PC-9 (cell line): ENCODE measurements at regions of chr2 and their contacts with region 1.

Region 1: GRCh38 chr2:219498280-219499057 is at the start of gene GMPPA:
- DNase-seq: peak; percentile 97
- H3K4me3 ChIP-seq: peak within 1 kb of the TSS; percentile 74
- H3K27ac ChIP-seq: peak within 1 kb of the TSS; percentile 81
- H3K4me1 ChIP-seq: peaks cover 19% of the 10 kb centered on the region
- H3K27me3 ChIP-seq: peaks cover 7% of the 10 kb centered on the region; the same call in 1 of the 2 replicates
- CTCF ChIP-seq: no peak
- total RNA-seq, gene GMPPA: 44.7 and 57.2 TPM in 2 replicates

Region 2: DNA sequence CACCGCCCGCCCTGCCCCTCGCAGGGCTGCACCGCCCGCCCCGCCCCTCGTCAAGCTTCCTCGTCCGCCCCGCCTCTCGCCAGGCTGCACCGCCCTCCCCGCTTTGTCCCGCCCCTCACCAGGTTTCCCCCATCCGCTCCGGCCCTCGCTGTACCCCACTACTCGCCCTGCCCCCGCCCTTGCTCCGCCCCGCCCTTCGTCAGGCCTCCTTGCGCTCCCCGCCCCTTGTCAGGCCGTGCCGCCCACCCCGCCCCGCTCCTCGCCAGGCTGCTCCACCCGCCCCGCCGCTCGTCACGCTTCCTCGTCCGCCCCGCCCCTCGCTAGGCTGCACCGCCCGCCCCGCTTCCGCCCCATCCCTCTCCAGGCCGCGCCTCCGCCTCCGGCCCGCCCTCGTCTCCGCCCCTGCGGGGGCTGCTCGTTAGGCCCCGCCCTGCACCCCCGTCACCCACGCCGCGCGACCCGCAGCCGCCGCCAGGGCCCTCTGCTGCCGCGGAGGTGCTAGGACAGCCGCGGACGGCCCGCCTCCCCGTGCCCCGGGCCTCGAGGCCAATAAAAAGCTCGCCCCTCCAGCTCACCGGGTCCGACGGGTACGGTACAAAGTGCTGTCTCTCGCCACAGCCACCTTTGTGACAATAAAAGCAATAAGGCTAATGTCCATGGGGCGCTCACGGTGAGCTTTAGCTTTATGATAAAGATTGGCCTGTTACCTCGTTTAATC is 110.2 kb before region 1 on chr2:
- CTCF ChIA-PET with region 1: interaction called, 14 read pairs
- POLR2A ChIA-PET with region 1: interaction called, 10 read pairs
- intact Hi-C with region 1: no loop called
- DNase-seq: peak; percentile 71 to 98
- H3K4me3 ChIP-seq: peak overlapping the region; percentile 53
- H3K27ac ChIP-seq: peak overlapping the region; percentile 30
- H3K4me1 ChIP-seq: peaks cover 6% of the 10 kb centered on the region; the same call in 1 of the 2 replicates
- H3K27me3 ChIP-seq: no peaks in the 10 kb centered on the region
- CTCF ChIP-seq: peak; percentile 60

Region 3: GRCh38 chr2:219441451-219442255 is 56.8 kb before region 1 on chr2:
- CTCF ChIA-PET with region 1: interaction called, 16 read pairs
- POLR2A ChIA-PET with region 1: interaction called, 8 read pairs
- intact Hi-C with region 1: no loop called
- DNase-seq: peak in 1 of 2 experiments; percentile 64
- H3K4me3 ChIP-seq: peak overlapping the region; percentile 64
- H3K27ac ChIP-seq: no peak overlapping the region
- H3K4me1 ChIP-seq: peaks cover 10% of the 10 kb centered on the region
- H3K27me3 ChIP-seq: no peaks in the 10 kb centered on the region
- CTCF ChIP-seq: no peak

Region 4: DNA sequence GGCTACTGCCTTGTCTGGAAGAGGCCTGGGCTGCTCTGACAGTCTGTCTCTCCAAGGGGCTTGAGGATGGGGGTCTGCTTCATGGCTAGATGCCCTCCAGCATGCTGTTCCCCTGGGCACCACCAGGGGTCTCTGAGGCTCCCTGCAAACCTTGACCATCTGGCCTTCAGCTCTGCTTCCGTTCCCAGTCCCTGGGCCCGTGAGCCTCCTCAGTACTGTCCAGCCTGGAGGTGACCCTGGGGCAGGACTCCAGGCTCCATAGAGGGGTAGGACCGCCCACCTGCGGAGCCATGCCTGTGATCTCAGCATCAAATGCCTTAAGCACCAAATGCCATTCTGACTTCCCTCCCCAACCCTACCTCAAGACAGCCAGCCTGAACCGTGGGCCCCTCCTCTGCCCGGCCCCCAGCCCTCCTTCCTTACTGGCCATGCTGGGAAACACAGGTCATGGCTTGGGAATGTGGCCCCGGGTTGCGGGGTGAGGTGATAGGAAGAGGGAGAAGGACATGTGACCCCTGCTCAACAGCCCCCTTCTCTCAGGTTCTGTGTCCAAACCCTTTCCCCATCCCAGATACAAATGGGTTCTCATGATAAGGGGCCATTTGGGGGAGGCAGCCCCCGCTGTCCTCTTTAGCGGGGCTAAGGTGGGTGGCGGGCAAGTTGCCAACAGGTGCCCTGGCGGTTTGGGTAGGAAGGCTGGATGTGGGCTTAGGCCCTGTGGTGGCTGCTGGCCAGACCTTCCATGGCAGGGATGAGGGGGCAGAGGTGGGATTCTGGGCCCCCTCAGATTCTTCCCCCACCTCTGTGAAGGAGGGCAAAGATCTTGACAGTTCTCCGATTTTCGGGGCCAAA is 38.8 kb before region 1 on chr2:
- CTCF ChIA-PET with region 1: interaction called, 3 read pairs
- POLR2A ChIA-PET with region 1: interaction called, 7 read pairs
- intact Hi-C with region 1: loop called (anchors 5 kb)
- DNase-seq: peak in 1 of 2 experiments; percentile 50
- H3K4me3 ChIP-seq: no peak overlapping the region
- H3K27ac ChIP-seq: no peak overlapping the region
- H3K4me1 ChIP-seq: peaks cover 27% of the 10 kb centered on the region
- H3K27me3 ChIP-seq: no peaks in the 10 kb centered on the region
- CTCF ChIP-seq: peak; percentile 91

Region 5: DNA sequence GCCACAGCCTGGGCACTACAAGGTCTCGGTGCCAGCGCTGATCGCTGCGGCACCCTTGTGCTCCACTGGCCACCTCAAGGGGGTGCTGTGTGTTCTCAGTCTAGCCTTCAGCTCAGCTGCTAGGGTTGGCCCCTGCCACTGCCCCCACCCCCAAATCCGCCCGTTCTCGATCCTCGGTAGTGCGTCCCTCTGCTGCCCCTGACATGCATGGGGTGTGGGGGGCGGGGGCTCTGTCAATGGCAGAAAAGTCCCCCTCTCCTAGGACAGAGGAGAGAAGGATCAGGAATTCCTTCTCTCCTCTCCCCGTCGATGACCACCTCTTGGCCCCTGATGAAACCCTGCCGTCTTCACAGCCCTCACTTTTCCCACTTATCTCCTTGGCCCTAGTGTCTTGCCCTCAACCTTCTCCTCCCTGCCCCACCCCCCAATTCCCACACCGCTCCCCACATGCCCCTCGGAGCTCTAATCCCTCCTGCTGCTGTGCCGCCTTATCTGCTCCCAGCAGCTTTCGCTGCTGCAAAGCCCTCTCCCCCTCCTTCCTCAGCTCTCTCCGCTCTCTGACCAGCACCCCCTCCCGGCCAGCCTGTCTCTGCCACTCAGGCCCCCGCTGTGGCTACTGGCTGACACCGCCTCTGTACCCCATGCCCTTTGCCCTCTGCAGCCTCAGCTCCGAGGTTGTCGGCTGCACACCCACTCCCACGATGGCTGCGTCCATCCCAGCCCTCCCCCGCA is 11.5 kb after region 1 on chr2:
- CTCF ChIA-PET with region 1: interaction called, 19 read pairs
- POLR2A ChIA-PET with region 1: interaction called, 3 read pairs
- intact Hi-C with region 1: no loop called
- DNase-seq: peak in 1 of 2 experiments; percentile 50
- H3K4me3 ChIP-seq: peak overlapping the region; percentile 53; the same call in 1 of the 2 replicates
- H3K27ac ChIP-seq: no peak overlapping the region
- H3K4me1 ChIP-seq: no peaks in the 10 kb centered on the region
- H3K27me3 ChIP-seq: peaks cover 47% of the 10 kb centered on the region
- CTCF ChIP-seq: peak; percentile 70

Region 6: DNA sequence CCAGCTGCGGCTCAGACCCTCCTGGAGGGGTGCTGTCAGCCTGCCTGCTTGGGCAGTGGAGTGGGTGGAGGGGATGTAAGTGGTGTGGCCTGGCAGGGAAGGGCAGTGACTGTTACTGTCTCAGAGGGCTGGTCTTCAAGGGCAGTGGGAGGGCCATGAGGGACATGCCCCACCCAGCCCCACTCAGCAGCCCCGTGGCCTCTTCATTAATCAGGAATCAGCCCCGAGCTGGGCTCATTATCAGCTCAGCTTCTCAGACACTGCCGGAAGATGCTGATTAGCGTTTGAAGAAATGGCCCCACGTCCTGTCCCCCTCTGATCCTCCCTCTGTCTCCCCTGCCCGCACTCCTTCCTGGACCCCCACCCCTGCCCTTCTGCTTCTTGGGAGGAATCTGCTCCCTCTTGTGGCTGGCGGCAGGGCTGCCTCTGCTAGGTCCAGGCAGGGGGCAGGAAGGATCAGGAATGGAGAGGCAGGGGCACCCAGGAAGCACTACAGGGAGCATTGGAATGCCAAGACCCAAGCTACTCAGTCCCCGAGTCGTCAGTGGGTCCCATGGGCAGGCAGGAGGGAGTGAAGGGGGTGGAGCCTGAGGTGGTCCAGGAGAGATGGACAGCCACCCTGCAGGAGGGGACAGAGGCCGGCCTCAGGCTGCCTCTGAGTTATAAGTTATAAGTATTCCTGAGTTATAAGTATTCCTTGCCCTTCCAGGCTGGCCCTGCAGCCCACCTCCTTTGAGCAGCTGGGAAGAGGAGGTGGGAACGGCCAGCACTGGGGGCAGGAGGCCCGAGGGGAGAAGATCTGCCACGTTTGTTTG is 22.8 kb after region 1 on chr2:
- CTCF ChIA-PET with region 1: interaction called, 4 read pairs
- POLR2A ChIA-PET with region 1: interaction called, 4 read pairs
- intact Hi-C with region 1: loop called (anchors 1 kb)
- DNase-seq: peak in 1 of 2 experiments; percentile 64
- H3K4me3 ChIP-seq: peak overlapping the region; percentile 11; the same call in 1 of the 2 replicates
- H3K27ac ChIP-seq: no peak overlapping the region
- H3K4me1 ChIP-seq: peaks cover 15% of the 10 kb centered on the region
- H3K27me3 ChIP-seq: peaks cover 24% of the 10 kb centered on the region
- CTCF ChIP-seq: peak; percentile 81

Region 7: DNA sequence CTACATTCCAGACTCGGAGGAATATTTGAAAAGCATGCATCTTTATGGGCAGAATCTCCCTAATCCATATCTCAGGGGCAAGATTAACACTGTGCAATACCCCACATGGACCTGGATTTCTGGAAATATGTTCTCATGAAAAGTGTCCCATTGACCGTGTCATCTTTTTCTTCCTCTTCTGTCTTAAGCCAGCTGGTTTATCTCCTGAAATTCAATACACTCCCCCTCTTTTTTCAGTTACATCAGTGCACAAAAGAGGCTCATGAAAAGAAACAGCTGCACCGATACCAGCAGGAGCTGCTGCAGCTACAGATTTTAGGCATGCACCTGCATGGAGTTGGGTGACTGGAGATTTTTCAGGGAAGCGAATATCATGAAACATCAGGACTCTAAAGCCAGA is 246.1 kb after region 1 on chr2:
- CTCF ChIA-PET with region 1: no interaction called
- POLR2A ChIA-PET with region 1: no interaction called
- intact Hi-C with region 1: no loop called
- DNase-seq: no peak
- H3K4me3 ChIP-seq: no peak overlapping the region
- H3K27ac ChIP-seq: no peak overlapping the region
- H3K4me1 ChIP-seq: no peaks in the 10 kb centered on the region
- H3K27me3 ChIP-seq: no peaks in the 10 kb centered on the region
- CTCF ChIP-seq: no peak